ENCODE measurements at regions of chr14 and their contacts with region 1.

Region 1: GRCh38 chr14:95442633-95443021 is 73.8 kb downstream of the SYNE3 start:
- DNase-seq: peak; percentile 81
- ATAC-seq: peak; percentile 99
- H3K4me3 ChIP-seq: no peak overlapping the region
- H3K27ac ChIP-seq: no peak overlapping the region
- H3K4me1 ChIP-seq: no peaks in the 10 kb centered on the region
- H3K27me3 ChIP-seq: no peaks in the 10 kb centered on the region
- CTCF ChIP-seq: peak; percentile 90

Region 2: GRCh38 chr14:95340201-95340697 is 102.4 kb before region 1 on chr14:
- CTCF ChIA-PET with region 1: no interaction called
- POLR2A ChIA-PET with region 1: no interaction called
- intact Hi-C with region 1: no loop called
- DNase-seq: no peak
- ATAC-seq: no peak
- H3K4me3 ChIP-seq: no peak overlapping the region
- H3K27ac ChIP-seq: peak overlapping the region; percentile 31; the same call in 1 of the 2 replicates
- H3K4me1 ChIP-seq: peaks cover 6% of the 10 kb centered on the region; the same call in 1 of the 2 replicates
- H3K27me3 ChIP-seq: no peaks in the 10 kb centered on the region
- CTCF ChIP-seq: no peak

Region 3: GRCh38 chr14:95477411-95478269 is 35.0 kb after region 1 on chr14:
- CTCF ChIA-PET with region 1: interaction called, 6 read pairs
- POLR2A ChIA-PET with region 1: no interaction called
- intact Hi-C with region 1: loop called (anchors 1 kb)
- DNase-seq: peak; percentile 11
- ATAC-seq: peak; percentile 50
- H3K4me3 ChIP-seq: no peak overlapping the region
- H3K27ac ChIP-seq: no peak overlapping the region
- H3K4me1 ChIP-seq: peaks cover 14% of the 10 kb centered on the region
- H3K27me3 ChIP-seq: no peaks in the 10 kb centered on the region
- CTCF ChIP-seq: no peak

Region 4: GRCh38 chr14:95527387-95528002 is 84.9 kb after region 1 on chr14:
- CTCF ChIA-PET with region 1: interaction called, 11 read pairs
- POLR2A ChIA-PET with region 1: no interaction called
- intact Hi-C with region 1: loop called (anchors 1 kb)
- DNase-seq: peak; percentile 58
- ATAC-seq: peak; percentile 6; the same call in 1 of the 2 replicates
- H3K4me3 ChIP-seq: no peak overlapping the region
- H3K27ac ChIP-seq: no peak overlapping the region
- H3K4me1 ChIP-seq: peaks cover 45% of the 10 kb centered on the region
- H3K27me3 ChIP-seq: no peaks in the 10 kb centered on the region
- CTCF ChIP-seq: peak; percentile 87

Measured in PC-3 (cell line).